Caco-2 (cell line): ENCODE measurements at regions of chr3 and their contacts with region 1.

Region 1: GRCh38 chr3:53478166-53478830 is 16.1 kb upstream of the CACNA1D start:
- DNase-seq: peak; percentile 67 to 71
- H3K4me3 ChIP-seq: no peak overlapping the region
- H3K4me3 Mint-ChIP-seq: peak overlapping the region; percentile 34
- H3K27ac Mint-ChIP-seq: peak overlapping the region; percentile 87
- H3K4me1 ChIP-seq: peaks cover 34% of the 10 kb centered on the region
- H3K4me1 Mint-ChIP-seq: peaks cover 14% of the 10 kb centered on the region
- H3K27me3 ChIP-seq: no peaks in the 10 kb centered on the region
- H3K27me3 Mint-ChIP-seq: no peaks in the 10 kb centered on the region
- CTCF ChIP-seq: no peak

Region 2: GRCh38 chr3:53155760-53156159 is 322.5 kb before region 1 on chr3:
- CTCF ChIA-PET with region 1: no interaction called
- POLR2A ChIA-PET with region 1: interaction called, 10 read pairs
- intact Hi-C with region 1: no loop called
- DNase-seq: no peak
- H3K4me3 ChIP-seq: no peak overlapping the region
- H3K4me3 Mint-ChIP-seq: no peak overlapping the region
- H3K27ac Mint-ChIP-seq: no peak overlapping the region
- H3K4me1 ChIP-seq: peaks cover 24% of the 10 kb centered on the region
- H3K4me1 Mint-ChIP-seq: peaks cover 22% of the 10 kb centered on the region
- H3K27me3 ChIP-seq: no peaks in the 10 kb centered on the region
- H3K27me3 Mint-ChIP-seq: no peaks in the 10 kb centered on the region
- CTCF ChIP-seq: no peak

Region 3: GRCh38 chr3:53287131-53287629 is 191.1 kb before region 1 on chr3:
- CTCF ChIA-PET with region 1: no interaction called
- POLR2A ChIA-PET with region 1: no interaction called
- intact Hi-C with region 1: no loop called
- DNase-seq: no peak
- H3K4me3 ChIP-seq: no peak overlapping the region
- H3K4me3 Mint-ChIP-seq: no peak overlapping the region
- H3K27ac Mint-ChIP-seq: no peak overlapping the region
- H3K4me1 ChIP-seq: no peaks in the 10 kb centered on the region
- H3K4me1 Mint-ChIP-seq: no peaks in the 10 kb centered on the region
- H3K27me3 ChIP-seq: no peaks in the 10 kb centered on the region
- H3K27me3 Mint-ChIP-seq: no peaks in the 10 kb centered on the region
- CTCF ChIP-seq: no peak

Region 4: GRCh38 chr3:53375019-53375418 is 103.3 kb before region 1 on chr3:
- CTCF ChIA-PET with region 1: no interaction called
- POLR2A ChIA-PET with region 1: no interaction called
- intact Hi-C with region 1: loop called (anchors 1 kb)
- DNase-seq: peak; percentile 80 to 82
- H3K4me3 ChIP-seq: no peak overlapping the region
- H3K4me3 Mint-ChIP-seq: no peak overlapping the region
- H3K27ac Mint-ChIP-seq: no peak overlapping the region
- H3K4me1 ChIP-seq: no peaks in the 10 kb centered on the region
- H3K4me1 Mint-ChIP-seq: no peaks in the 10 kb centered on the region
- H3K27me3 ChIP-seq: no peaks in the 10 kb centered on the region
- H3K27me3 Mint-ChIP-seq: no peaks in the 10 kb centered on the region
- CTCF ChIP-seq: peak; percentile 86 to 89

Region 5: DNA sequence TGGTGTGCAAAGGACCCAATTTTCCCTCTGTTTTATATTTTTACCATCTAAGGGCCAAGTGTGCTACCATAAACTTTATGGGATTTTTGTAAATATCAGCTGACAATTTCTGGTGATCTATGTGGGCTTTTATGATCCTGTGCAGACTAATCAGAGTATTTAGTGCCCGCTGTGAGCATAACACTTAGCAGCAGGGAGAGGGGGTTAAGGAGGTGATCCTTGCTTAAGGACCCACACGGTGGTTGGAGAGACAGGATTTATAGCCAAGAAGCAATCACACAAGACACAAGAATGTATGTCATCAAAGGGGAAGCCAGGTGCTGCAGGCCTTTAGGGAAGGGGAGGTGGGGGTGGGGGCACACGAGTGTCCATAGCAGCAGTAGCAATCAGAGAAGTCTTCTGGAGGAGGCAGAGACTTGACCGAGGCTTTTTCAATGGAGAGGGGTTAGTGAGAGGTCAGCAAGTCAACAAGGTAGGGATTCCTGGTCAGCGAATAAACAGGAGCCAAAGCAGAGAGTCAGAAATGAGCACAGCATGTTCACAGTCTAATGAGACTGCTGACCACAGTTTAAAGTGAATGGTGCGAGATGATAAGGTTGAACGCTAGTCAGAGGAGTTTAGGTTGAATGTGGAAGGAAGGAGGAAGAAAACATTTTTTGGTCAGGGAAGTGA is 11.6 kb after region 1 on chr3:
- CTCF ChIA-PET with region 1: interaction called, 4 read pairs
- POLR2A ChIA-PET with region 1: interaction called, 4 read pairs
- intact Hi-C with region 1: loop called (anchors 1 kb)
- DNase-seq: peak in 1 of 2 experiments; percentile 68
- H3K4me3 ChIP-seq: no peak overlapping the region
- H3K4me3 Mint-ChIP-seq: no peak overlapping the region
- H3K27ac Mint-ChIP-seq: no peak overlapping the region
- H3K4me1 ChIP-seq: peaks cover 23% of the 10 kb centered on the region
- H3K4me1 Mint-ChIP-seq: peaks cover 13% of the 10 kb centered on the region
- H3K27me3 ChIP-seq: no peaks in the 10 kb centered on the region
- H3K27me3 Mint-ChIP-seq: no peaks in the 10 kb centered on the region
- CTCF ChIP-seq: no peak

Region 6: DNA sequence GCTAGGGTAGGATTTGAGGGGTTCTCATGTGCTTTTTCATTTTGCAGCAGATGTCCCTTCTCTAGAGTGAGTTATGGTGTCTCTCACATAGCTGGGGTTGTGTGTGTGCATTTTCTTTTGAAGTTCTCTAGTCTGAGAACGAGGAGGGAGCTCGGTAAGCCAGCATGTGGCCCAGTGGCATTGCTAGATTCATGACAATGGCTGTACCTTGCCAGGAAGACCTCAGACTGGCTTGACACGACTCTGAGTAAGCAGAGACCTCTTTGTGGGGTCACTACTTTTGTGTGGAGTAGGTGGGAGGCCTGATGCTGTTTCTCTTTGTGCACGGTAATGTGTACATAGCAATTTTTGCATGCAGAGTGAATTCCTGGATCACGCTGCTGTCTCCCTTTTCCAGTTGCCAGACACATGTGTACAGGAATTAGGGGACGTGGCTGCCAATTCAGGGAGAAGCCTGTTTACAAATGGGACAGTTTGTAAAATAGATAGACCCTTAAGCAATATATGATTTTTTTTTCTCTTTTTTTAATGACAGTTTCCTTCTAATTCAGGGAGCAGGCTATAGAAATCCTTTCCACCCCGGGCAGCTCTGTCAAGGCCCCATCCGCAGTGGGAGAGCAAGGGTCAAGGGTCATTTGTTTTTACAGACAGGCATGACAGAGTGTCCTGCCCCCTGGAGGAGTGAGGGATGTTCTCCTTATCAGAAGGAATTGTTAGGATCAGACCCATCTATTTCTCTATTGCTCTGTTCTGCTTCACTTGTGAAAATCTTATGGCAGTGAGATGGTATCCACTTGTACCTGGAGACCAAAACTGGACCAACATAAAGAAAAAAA is 20.7 kb after region 1 on chr3:
- CTCF ChIA-PET with region 1: interaction called, 4 read pairs
- POLR2A ChIA-PET with region 1: interaction called, 4 read pairs
- intact Hi-C with region 1: loop called (anchors 1 kb)
- DNase-seq: peak; percentile 65
- H3K4me3 ChIP-seq: no peak overlapping the region
- H3K4me3 Mint-ChIP-seq: no peak overlapping the region
- H3K27ac Mint-ChIP-seq: no peak overlapping the region
- H3K4me1 ChIP-seq: peaks cover 12% of the 10 kb centered on the region
- H3K4me1 Mint-ChIP-seq: peaks cover 10% of the 10 kb centered on the region
- H3K27me3 ChIP-seq: no peaks in the 10 kb centered on the region
- H3K27me3 Mint-ChIP-seq: no peaks in the 10 kb centered on the region
- CTCF ChIP-seq: peak; percentile 61 to 67